Naive thymus-derived CD4-positive, alpha-beta T cell (primary cell): ENCODE measurements at regions of chr3 and their contacts with region 1.

Region 1: DNA sequence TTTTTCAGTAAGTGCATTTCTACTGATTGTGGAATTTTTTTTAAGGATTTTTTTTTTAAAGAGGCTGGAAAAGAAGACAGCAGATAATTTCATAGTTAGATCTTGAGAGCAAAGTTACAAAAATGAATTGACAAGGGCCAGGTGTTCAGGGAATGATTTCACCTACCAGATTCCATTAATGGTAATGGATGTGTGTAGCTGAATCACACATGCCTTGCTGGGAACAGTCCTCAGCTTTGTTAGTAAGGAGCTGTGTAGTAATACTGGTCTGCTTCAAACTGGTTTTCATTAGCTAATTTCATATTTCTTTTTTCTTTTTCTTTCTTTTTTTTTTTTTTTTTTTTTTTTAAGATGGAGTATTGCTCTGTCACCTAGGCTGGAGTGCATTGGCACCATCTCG is 16.0 kb downstream of the NR1D2 start:
- DNase-seq: no peak
- ATAC-seq: no peak
- H3K4me3 ChIP-seq: no peak overlapping the region
- H3K4me3 Mint-ChIP-seq: no peak overlapping the region
- H3K27ac ChIP-seq: no peak overlapping the region
- H3K27ac Mint-ChIP-seq: peak overlapping the region in 2 of 9 donors; percentile 40 to 46
- H3K4me1 ChIP-seq: no peaks in the 10 kb centered on the region
- H3K4me1 Mint-ChIP-seq: peaks cover 3 to 60% (median 32%) of the 10 kb centered on the region in 7 donors
- H3K27me3 ChIP-seq: no peaks in the 10 kb centered on the region
- H3K27me3 Mint-ChIP-seq: no peaks in the 10 kb centered on the region

Region 2: DNA sequence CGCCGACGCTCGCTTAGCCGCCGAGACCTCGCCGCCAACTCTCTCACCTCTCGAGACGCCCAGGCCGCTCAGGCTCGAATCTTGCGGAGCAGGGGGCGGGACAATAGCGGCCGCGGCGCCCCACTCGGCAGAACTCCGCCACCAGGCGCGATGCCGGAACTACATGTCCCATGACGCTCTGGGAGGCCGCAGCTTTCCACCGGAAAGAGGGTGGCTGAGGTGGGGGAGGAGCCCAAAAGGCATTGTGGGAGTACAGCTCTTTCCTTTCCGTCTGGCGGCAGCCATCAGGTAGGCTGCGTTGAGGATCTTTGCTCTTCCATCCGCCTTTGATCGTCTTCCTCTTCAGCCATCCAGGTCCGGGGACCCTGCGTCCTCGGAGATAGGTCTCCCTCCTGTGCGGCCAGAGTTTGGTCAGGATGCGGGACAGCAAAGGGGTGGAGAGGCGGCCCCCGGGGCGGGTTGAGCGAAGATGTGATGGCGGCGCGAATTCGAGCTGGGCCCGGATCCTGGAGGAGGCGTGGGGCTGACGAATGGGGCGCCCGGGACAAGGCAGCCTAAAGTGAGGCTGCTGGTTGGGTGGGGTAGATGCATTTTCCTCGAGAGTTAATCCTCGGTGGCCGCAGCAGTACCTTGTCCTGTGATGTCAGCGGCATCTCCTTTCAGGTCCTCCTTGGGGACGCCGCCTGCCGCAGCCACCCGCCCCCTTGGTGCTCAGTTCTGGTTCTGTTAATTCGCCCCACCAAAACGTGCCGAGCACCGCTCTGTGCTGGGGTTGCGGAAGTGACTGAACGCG is 44.0 kb before region 1 on chr3 and contains the starts of genes NKIRAS1 and RPL15:
- CTCF ChIA-PET with region 1: interaction called, 10 read pairs
- POLR2A ChIA-PET with region 1: interaction called, 9 read pairs
- intact Hi-C with region 1: no loop called
- DNase-seq: peak; percentile 90 to 98 (median 97)
- ATAC-seq: peak; percentile 97
- H3K4me3 ChIP-seq: peak within 1 kb of the TSS; percentile 88
- H3K4me3 Mint-ChIP-seq: peak within 1 kb of the TSS; percentile 92 to 100 (median 98)
- H3K27ac ChIP-seq: peak within 1 kb of the TSS; percentile 83
- H3K27ac Mint-ChIP-seq: peak within 1 kb of the TSS; percentile 97 to 99 (median 98)
- H3K4me1 ChIP-seq: peaks cover 14 to 18% of the 10 kb centered on the region in 2 donors
- H3K4me1 Mint-ChIP-seq: peaks cover 33 to 52% (median 49%) of the 10 kb centered on the region in 7 donors
- H3K27me3 ChIP-seq: no peaks in the 10 kb centered on the region
- H3K27me3 Mint-ChIP-seq: peaks cover 0 to 4% (median 0%) of the 10 kb centered on the region in 5 donors
- total RNA-seq, gene NKIRAS1: 2.2 to 6.4 (median 3.2) TPM
- total RNA-seq, gene RPL15: 1,489 to 2,250 (median 2,129) TPM

Region 3: DNA sequence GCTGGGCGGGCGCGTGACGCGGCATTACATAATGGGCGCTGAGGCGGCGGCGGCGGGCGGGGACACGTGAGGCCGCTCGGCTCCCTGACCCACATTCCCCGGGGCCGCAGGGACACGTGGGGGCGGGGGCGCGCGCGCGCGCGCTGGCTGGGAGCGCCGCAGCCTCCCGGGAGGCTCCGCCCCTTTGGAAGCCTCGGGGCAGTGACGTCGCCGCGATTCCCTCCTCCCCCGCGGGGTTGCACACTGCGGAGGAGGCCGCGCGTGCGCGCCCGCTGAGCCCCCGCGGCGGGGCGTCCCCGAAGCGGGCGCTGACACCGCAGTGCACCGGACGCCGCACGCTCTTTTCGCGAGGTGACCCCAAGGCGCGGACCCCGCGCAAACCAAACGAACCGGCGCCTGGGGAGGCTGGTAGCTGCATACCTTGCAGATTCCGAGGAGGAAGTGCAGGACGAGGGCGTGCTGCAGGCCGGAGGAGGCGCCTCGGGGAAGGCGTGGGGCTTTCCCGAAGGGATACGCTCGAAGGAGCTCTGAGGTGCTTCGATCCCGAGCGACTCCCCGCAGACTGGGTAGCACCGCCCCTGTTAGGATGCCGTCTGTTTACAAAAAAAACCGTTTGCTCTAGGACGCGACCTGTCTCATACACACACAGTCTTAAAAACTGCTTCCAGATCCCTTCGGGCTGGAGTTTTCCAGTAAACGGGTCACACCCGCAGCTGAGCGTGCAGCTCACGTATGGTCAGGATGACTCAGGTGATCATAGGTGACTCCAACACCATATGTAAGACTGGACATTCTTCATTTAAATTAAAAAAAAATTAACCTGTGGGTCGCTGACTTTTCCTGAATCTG is 14.9 kb before region 1 on chr3:
- CTCF ChIA-PET with region 1: interaction called, 4 read pairs
- POLR2A ChIA-PET with region 1: interaction called, 3 read pairs
- intact Hi-C with region 1: loop called in 1 of 2 experiments (anchors 2 kb)
- DNase-seq: peak; percentile 93 to 98 (median 97)
- ATAC-seq: peak; percentile 89
- H3K4me3 ChIP-seq: peak overlapping the region; percentile 79
- H3K4me3 Mint-ChIP-seq: peak overlapping the region; percentile 70 to 90 (median 87)
- H3K27ac ChIP-seq: peak overlapping the region; percentile 81
- H3K27ac Mint-ChIP-seq: peak overlapping the region; percentile 53 to 95 (median 90)
- H3K4me1 ChIP-seq: peaks cover 28 to 31% of the 10 kb centered on the region in 2 donors
- H3K4me1 Mint-ChIP-seq: peaks cover 30 to 61% (median 48%) of the 10 kb centered on the region in 7 donors
- H3K27me3 ChIP-seq: no peaks in the 10 kb centered on the region
- H3K27me3 Mint-ChIP-seq: peaks cover 0 to 41% (median 0%) of the 10 kb centered on the region in 5 donors